ENCODE measurements at regions of chr22 and their contacts with region 1.

Region 1: DNA sequence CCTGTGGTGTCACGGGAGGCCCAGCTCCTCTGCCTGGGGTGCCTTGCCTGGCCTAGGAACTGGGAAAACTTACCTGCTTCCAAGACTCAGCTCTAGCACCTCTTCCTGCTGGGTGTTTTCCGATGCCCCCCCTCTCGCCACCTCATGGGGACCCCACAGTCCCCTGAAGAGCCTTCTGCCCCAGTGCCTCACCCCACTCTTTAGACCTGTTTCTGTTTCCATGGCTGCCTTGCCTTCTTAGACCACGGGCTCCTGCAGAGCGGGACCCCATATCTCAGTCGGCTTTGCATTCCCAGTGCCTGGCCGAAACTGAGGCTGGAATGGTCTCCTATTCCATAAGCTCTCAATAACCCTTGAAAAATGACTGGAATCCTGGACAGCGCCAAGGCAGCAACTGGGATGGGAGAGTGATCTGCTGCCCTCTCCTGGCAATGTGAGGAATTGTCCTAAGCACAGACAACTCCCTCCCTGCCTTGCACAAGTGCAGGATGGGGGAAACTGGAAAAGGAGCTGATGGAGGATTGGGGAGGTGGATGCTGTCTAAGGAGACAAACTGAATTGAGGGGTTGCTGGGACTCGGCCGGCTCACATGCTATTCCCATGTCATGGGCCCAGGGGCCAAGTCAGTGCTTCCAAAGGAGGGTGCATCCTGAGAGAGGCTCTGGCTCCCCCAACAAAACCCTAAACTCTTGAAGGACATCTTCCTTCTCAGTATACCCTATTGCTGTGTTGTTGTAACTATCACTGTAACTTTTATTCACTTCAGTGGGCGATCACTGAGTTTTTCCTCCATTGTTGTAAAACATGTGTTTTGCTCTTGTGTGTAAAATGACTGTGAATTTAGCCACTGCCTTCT is 26.6 kb upstream of the IL17RA start:
- DNase-seq: peak in 26 of 35 experiments; percentile 2 to 67 (median 27)
- ATAC-seq: peak in 3 of 4 experiments; percentile 56 to 73 (median 68)
- H3K4me3 ChIP-seq: no peak overlapping the region
- H3K4me3 Mint-ChIP-seq: no peak overlapping the region
- H3K27ac ChIP-seq: no peak overlapping the region
- H3K27ac Mint-ChIP-seq: no peak overlapping the region
- H3K4me1 ChIP-seq: peaks cover 0 to 4% of the 10 kb centered on the region in 2 experiments
- H3K4me1 Mint-ChIP-seq: peaks cover 3 to 5% (median 5%) of the 10 kb centered on the region in 3 donors
- H3K27me3 ChIP-seq: peaks cover 0 to 16% of the 10 kb centered on the region in 2 experiments
- H3K27me3 Mint-ChIP-seq: peaks cover 6 to 22% of the 10 kb centered on the region in 2 donors

Region 2: DNA sequence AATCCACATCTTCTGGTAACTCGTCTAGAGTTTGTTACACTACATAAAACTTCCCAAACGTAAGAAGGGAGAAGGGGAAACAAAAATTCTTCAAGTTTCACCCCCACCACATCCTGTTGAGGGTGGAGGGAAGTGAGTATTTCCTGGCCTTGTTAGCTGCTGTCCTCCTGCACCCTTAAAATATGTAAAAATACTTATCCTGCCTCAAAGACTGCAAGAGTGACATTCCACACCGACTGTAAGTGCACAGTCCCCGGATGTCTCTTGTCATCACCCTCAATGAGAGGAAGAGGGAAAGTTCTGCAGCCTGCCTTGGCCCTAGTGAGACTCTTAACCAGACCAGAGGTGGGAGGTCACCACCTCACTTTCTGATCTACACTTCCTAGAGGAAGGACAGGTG is 59.7 kb after region 1 on chr22:
- CTCF ChIA-PET with region 1: no interaction called
- POLR2A ChIA-PET with region 1: no interaction called
- DNase-seq: peak in 3 of 35 experiments; percentile 18 to 35 (median 22)
- ATAC-seq: peak; percentile 25 to 57 (median 40)
- H3K4me3 ChIP-seq: peak overlapping the region in 1 of 2 donors; percentile 60
- H3K4me3 Mint-ChIP-seq: peak overlapping the region; percentile 21 to 82 (median 61)
- H3K27ac ChIP-seq: peak overlapping the region; percentile 26
- H3K27ac Mint-ChIP-seq: peak overlapping the region; percentile 86 to 90
- H3K4me1 ChIP-seq: peaks cover 56 to 71% of the 10 kb centered on the region in 2 experiments
- H3K4me1 Mint-ChIP-seq: peaks cover 69 to 70% (median 70%) of the 10 kb centered on the region in 3 donors
- H3K27me3 ChIP-seq: peaks cover 0 to 19% of the 10 kb centered on the region in 2 experiments
- H3K27me3 Mint-ChIP-seq: peaks cover 6 to 23% of the 10 kb centered on the region in 2 donors

Region 3: GRCh38 chr22:17191163-17191784 is 133.1 kb after region 1 on chr22:
- CTCF ChIA-PET with region 1: no interaction called
- POLR2A ChIA-PET with region 1: interaction called in 1 of 2 experiments, 10 read pairs
- DNase-seq: no peak
- ATAC-seq: no peak
- H3K4me3 ChIP-seq: no peak overlapping the region
- H3K4me3 Mint-ChIP-seq: no peak overlapping the region
- H3K27ac ChIP-seq: no peak overlapping the region
- H3K27ac Mint-ChIP-seq: peak overlapping the region in 1 of 2 donors; percentile 27
- H3K4me1 ChIP-seq: no peaks in the 10 kb centered on the region
- H3K4me1 Mint-ChIP-seq: peaks cover 7 to 8% (median 7%) of the 10 kb centered on the region in 3 donors
- H3K27me3 ChIP-seq: no peaks in the 10 kb centered on the region
- H3K27me3 Mint-ChIP-seq: no peaks in the 10 kb centered on the region

Region 4: DNA sequence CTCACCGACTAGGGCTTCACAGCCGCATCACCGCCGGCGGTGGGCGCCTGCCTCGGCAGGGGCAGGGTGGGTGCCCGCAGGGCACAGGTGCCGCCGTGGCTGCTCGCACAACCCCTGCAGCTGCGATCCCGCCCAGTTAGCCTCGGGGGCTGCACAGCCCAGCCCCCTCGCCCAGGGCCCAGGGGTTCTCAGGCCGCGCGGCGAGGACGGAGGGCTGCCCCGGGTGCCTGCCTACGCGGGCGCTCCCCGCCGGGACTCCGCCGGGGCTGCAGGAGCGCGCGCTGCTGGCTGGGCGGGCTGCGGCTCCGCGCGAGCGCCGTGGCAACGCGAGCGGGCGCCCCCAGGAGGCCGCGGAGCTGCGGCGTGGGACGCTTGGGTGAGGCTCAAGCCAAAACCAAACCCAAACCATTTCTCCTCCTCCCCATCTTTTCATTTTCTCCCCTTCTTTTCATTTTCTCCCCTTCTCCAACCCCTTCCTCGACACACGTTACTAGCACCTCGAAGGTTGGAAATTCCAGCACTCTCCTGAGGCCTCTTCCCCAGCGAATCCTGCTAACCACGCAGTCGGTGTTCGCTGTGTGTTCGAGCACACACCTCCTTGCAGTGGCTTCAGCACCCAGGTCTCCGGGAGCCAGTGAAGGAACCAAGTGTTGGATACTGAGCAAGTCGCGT is 966.2 kb after region 1 on chr22 and contains the start of gene MICAL3:
- CTCF ChIA-PET with region 1: no interaction called
- POLR2A ChIA-PET with region 1: no interaction called
- DNase-seq: peak; percentile 6 to 81 (median 49)
- ATAC-seq: peak; percentile 95 to 98 (median 96)
- H3K4me3 ChIP-seq: peak within 1 kb of the TSS; percentile 30 to 67
- H3K4me3 Mint-ChIP-seq: peak within 1 kb of the TSS; percentile 85 to 90 (median 90)
- H3K27ac ChIP-seq: no peak within 1 kb of the TSS
- H3K27ac Mint-ChIP-seq: peak within 1 kb of the TSS in 1 of 2 donors; percentile 73
- H3K4me1 ChIP-seq: peaks cover 3 to 13% of the 10 kb centered on the region in 2 experiments
- H3K4me1 Mint-ChIP-seq: peaks cover 10 to 16% (median 13%) of the 10 kb centered on the region in 3 donors
- H3K27me3 ChIP-seq: peaks cover 0 to 41% of the 10 kb centered on the region in 2 experiments
- H3K27me3 Mint-ChIP-seq: peaks cover 36 to 40% of the 10 kb centered on the region in 2 donors
- total RNA-seq, gene MICAL3: 19.1 to 37.5 (median 22.3) TPM

Measured in T-cell (primary cell).